CD4-positive, alpha-beta T cell (primary cell): ENCODE measurements at regions of chr5 and their contacts with region 1.

Region 1: DNA sequence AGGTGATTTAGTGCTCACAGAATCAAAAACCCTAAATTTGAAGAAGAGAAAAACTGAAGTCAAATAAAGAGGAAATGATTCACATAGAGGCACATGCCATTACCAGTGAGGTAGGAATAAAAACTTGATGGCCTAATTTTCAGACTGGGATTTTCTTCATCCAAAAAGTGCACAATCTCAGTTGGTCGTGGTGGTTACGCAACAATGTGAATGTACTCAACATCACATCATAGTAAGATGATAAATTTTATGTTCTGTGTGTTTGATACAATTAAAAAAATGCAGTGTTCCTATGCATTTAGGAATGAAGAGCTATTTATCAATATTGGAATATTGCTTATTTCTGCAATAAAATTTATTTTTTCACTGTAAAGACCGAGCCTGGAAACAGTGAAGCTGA is 60.7 kb downstream of the SV2C start:
- DNase-seq: no peak
- ATAC-seq: no peak
- H3K4me3 ChIP-seq: no peak overlapping the region
- H3K4me3 Mint-ChIP-seq: no peak overlapping the region
- H3K27ac ChIP-seq: no peak overlapping the region
- H3K27ac Mint-ChIP-seq: no peak overlapping the region
- H3K4me1 ChIP-seq: no peaks in the 10 kb centered on the region
- H3K4me1 Mint-ChIP-seq: no peaks in the 10 kb centered on the region
- H3K27me3 ChIP-seq: peaks cover 0 to 4% of the 10 kb centered on the region in 2 experiments
- H3K27me3 Mint-ChIP-seq: peaks cover 4% of the 10 kb centered on the region
- CTCF ChIP-seq: no peak

Region 2: GRCh38 chr5:76083555-76084495 is 60.1 kb before region 1 on chr5:
- CTCF ChIA-PET with region 1: no interaction called
- POLR2A ChIA-PET with region 1: no interaction called
- intact Hi-C with region 1: loop called in 1 of 2 experiments (anchors 2 kb)
- DNase-seq: no peak
- ATAC-seq: no peak
- H3K4me3 ChIP-seq: peak overlapping the region; percentile 19
- H3K4me3 Mint-ChIP-seq: peak overlapping the region; percentile 73
- H3K27ac ChIP-seq: no peak overlapping the region
- H3K27ac Mint-ChIP-seq: no peak overlapping the region
- H3K4me1 ChIP-seq: peaks cover 29% of the 10 kb centered on the region
- H3K4me1 Mint-ChIP-seq: peaks cover 25% of the 10 kb centered on the region
- H3K27me3 ChIP-seq: peaks cover 34 to 70% of the 10 kb centered on the region in 2 experiments
- H3K27me3 Mint-ChIP-seq: peaks cover 86% of the 10 kb centered on the region
- CTCF ChIP-seq: no peak

Region 3: GRCh38 chr5:76125888-76126287 is 18.0 kb before region 1 on chr5:
- CTCF ChIA-PET with region 1: no interaction called
- POLR2A ChIA-PET with region 1: no interaction called
- intact Hi-C with region 1: no loop called
- DNase-seq: no peak
- ATAC-seq: no peak
- H3K4me3 ChIP-seq: no peak overlapping the region
- H3K4me3 Mint-ChIP-seq: no peak overlapping the region
- H3K27ac ChIP-seq: no peak overlapping the region
- H3K27ac Mint-ChIP-seq: no peak overlapping the region
- H3K4me1 ChIP-seq: no peaks in the 10 kb centered on the region
- H3K4me1 Mint-ChIP-seq: no peaks in the 10 kb centered on the region
- H3K27me3 ChIP-seq: peaks cover 0 to 6% of the 10 kb centered on the region in 2 experiments
- H3K27me3 Mint-ChIP-seq: peaks cover 25% of the 10 kb centered on the region
- CTCF ChIP-seq: no peak